B cell (primary cell): ENCODE measurements at regions of chr5 and their contacts with region 1.

Region 1: GRCh38 chr5:113513384-113514288 is at the start of gene YTHDC2:
- DNase-seq: peak; percentile 93
- ATAC-seq: peak; percentile 97
- H3K4me3 ChIP-seq: peak within 1 kb of the TSS; percentile 59 to 93 (median 84)
- H3K4me3 Mint-ChIP-seq: peak within 1 kb of the TSS; percentile 99
- H3K27ac ChIP-seq: peak within 1 kb of the TSS; percentile 83 to 93
- H3K27ac Mint-ChIP-seq: peak within 1 kb of the TSS; percentile 95
- H3K4me1 ChIP-seq: peaks cover 7 to 17% of the 10 kb centered on the region in 2 donors
- H3K4me1 Mint-ChIP-seq: peaks cover 30% of the 10 kb centered on the region
- H3K27me3 ChIP-seq: peaks cover 0 to 8% (median 3%) of the 10 kb centered on the region in 4 experiments
- H3K27me3 Mint-ChIP-seq: peaks cover 18% of the 10 kb centered on the region
- CTCF ChIP-seq: peak; percentile 18
- total RNA-seq, gene YTHDC2: 52.6 and 62.4 TPM in 2 replicates

Region 2: DNA sequence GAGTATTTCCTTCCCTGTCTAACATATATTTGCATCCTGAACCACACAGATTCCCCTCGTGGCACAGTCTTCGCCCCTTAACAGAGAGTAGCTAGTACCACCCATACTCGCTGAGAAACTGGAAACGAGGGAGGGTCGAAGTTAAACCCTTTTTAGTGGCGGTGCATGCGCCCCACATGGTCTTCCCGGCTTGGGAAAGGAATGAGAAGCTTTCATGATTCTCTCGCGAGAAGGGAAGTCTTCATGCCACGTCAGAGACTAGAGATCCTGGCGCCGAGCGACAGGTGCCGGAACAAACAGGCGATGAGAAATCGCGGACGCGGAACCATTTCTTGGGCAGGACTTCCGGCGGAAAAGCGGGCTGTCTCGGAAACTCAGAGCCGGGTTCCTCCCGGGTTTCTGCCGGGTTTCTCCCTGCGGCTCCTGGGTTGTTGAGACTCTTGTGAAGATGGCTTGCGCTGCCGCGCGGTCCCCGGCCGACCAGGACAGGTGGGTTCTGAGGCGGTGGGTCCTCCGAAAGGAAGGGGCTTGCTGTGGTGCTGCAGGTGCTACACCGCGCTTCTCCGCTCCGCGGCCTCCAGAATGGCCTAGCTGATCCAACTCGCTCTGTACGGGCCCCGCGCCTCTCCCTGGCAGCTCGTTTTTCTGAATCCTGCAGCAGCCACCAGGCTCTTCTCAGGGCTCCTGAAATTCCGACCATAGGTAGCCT is 652.6 kb before region 1 on chr5 and contains the start of gene SRP19:
- CTCF ChIA-PET with region 1: no interaction called
- POLR2A ChIA-PET with region 1: no interaction called
- intact Hi-C with region 1: loop called (anchors 5 kb)
- DNase-seq: peak; percentile 94
- ATAC-seq: peak; percentile 94
- H3K4me3 ChIP-seq: peak within 1 kb of the TSS; percentile 77 to 99 (median 95)
- H3K4me3 Mint-ChIP-seq: peak within 1 kb of the TSS; percentile 98
- H3K27ac ChIP-seq: peak within 1 kb of the TSS; percentile 83 to 92
- H3K27ac Mint-ChIP-seq: peak within 1 kb of the TSS; percentile 93
- H3K4me1 ChIP-seq: peaks cover 17 to 19% of the 10 kb centered on the region in 2 donors
- H3K4me1 Mint-ChIP-seq: peaks cover 30% of the 10 kb centered on the region
- H3K27me3 ChIP-seq: peaks cover 0 to 2% (median under 1%) of the 10 kb centered on the region in 4 experiments
- H3K27me3 Mint-ChIP-seq: peaks cover 17% of the 10 kb centered on the region
- CTCF ChIP-seq: no peak
- total RNA-seq, gene SRP19: 33.8 and 41.5 TPM in 2 replicates

Region 3: DNA sequence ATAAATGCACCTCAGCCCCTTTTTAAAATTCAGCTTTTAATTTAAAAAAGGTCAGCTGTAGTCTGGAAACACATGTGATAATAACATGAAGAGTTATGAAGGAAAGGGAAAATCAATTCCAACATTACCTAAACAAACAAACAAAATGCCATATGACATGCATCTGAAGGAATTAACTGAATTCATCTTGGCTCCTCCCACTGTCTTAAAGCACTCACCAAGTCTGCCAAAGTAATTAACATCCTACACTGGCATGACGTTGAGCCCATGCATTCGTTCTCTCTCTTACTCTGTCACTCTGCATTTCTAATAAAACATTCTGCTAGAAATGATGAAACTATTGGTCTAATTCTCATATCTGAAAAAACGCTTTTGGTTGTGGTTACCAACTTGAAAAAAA is 116.6 kb before region 1 on chr5:
- CTCF ChIA-PET with region 1: no interaction called
- POLR2A ChIA-PET with region 1: no interaction called
- intact Hi-C with region 1: no loop called
- DNase-seq: no peak
- ATAC-seq: no peak
- H3K4me3 ChIP-seq: no peak overlapping the region
- H3K4me3 Mint-ChIP-seq: no peak overlapping the region
- H3K27ac ChIP-seq: no peak overlapping the region
- H3K27ac Mint-ChIP-seq: no peak overlapping the region
- H3K4me1 ChIP-seq: no peaks in the 10 kb centered on the region
- H3K4me1 Mint-ChIP-seq: no peaks in the 10 kb centered on the region
- H3K27me3 ChIP-seq: peaks cover 0 to 3% (median 0%) of the 10 kb centered on the region in 4 experiments
- H3K27me3 Mint-ChIP-seq: peaks cover 3% of the 10 kb centered on the region
- CTCF ChIP-seq: no peak

Region 4: DNA sequence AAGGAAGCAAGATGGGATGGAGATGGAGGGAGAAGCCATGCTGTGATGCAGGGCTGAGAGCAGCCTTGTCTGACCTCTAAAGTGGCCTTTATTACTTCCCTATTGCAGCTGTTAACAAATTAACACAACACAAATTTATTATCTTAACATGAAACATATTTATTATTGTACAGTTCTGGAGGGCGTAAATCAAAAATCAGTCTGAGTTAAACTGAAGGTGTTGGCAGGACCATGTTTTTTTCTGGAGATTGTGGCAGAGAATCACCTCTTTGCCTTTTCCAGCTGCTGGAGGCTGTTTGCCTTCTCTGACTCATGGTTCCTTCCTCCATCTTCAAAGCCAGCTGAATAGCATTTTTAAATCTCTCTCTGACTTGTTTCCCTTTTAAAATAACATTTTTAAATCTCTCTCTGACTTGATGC is 18.2 kb before region 1 on chr5:
- CTCF ChIA-PET with region 1: no interaction called
- POLR2A ChIA-PET with region 1: no interaction called
- intact Hi-C with region 1: no loop called
- DNase-seq: no peak
- ATAC-seq: no peak
- H3K4me3 ChIP-seq: no peak overlapping the region
- H3K4me3 Mint-ChIP-seq: no peak overlapping the region
- H3K27ac ChIP-seq: no peak overlapping the region
- H3K27ac Mint-ChIP-seq: no peak overlapping the region
- H3K4me1 ChIP-seq: no peaks in the 10 kb centered on the region
- H3K4me1 Mint-ChIP-seq: no peaks in the 10 kb centered on the region
- H3K27me3 ChIP-seq: peaks cover 0 to 16% (median 7%) of the 10 kb centered on the region in 4 experiments
- H3K27me3 Mint-ChIP-seq: peaks cover 45% of the 10 kb centered on the region
- CTCF ChIP-seq: no peak